HepG2 (cell line): ENCODE measurements at regions of chr6 and their contacts with region 1.

Region 1: DNA sequence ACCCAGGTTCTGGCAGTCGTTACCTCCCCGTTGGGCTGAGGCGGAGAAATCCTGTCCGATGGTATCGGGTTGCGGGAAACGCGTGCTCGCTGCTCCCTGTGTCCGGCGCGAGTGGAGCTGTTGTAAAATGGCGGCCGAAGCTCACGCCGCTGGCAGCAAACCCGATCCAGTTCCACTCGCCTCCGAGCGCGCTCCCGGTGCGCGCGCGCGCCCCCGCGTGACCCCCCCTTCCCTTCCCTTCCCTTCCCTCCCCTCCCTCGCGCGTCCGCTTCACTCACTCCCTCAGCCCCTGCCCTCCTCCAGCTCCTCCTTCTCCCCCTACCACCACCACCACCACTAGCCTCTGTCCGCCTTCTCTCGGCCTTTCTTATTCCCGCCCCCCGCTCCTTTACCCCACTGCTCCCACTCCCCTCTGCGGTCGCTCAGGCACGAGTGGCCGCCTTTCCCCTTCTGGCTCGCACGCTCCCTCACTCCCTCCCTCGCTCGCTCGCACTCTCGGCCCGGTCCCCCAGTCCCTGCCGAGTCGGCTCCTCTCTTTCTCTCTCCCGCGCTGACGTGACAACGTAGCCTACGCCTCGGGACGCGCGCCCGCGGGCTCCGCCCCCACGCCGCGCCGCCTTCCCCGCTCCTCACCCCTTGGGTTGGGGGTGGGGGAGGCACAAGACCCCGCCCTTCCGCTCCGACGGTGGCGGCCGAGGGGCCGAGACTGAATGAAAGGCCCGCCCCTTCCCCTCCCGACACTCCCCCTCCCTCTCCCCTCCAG is at the start of gene SYNCRIP:
- DNase-seq: peak; percentile 95
- ATAC-seq: peak; percentile 83
- H3K4me3 ChIP-seq: peak within 1 kb of the TSS; percentile 78 to 96 (median 96)
- H3K27ac ChIP-seq: peak within 1 kb of the TSS; percentile 99
- H3K4me1 ChIP-seq: peaks cover 38% of the 10 kb centered on the region
- H3K27me3 ChIP-seq: no peaks in the 10 kb centered on the region; a peak in 1 of 5 replicates
- CTCF ChIP-seq: peak; percentile 17; the same call in 1 of the 2 replicates
- EP300 ChIP-seq: peak in 1 of 2 experiments; percentile 30; a peak in 1 of 4 replicates
- POLR2A ChIP-seq: peak; percentile 79 to 97
- RAD21 ChIP-seq: no peak
- total RNA-seq, gene SYNCRIP: 112 and 183 TPM in 2 replicates

Region 2: GRCh38 chr6:85612690-85613474 is 30.1 kb before region 1 on chr6:
- CTCF ChIA-PET with region 1: no interaction called
- POLR2A ChIA-PET with region 1: no interaction called
- in situ Hi-C with region 1: no loop called
- intact Hi-C with region 1: no loop called
- DNase-seq: no peak
- ATAC-seq: no peak
- H3K4me3 ChIP-seq: no peak overlapping the region
- H3K27ac ChIP-seq: no peak overlapping the region
- H3K4me1 ChIP-seq: no peaks in the 10 kb centered on the region
- H3K27me3 ChIP-seq: no peaks in the 10 kb centered on the region
- CTCF ChIP-seq: no peak
- EP300 ChIP-seq: no peak
- POLR2A ChIP-seq: no peak
- RAD21 ChIP-seq: no peak

Region 3: GRCh38 chr6:85632164-85632942 is 10.6 kb before region 1 on chr6:
- CTCF ChIA-PET with region 1: no interaction called
- POLR2A ChIA-PET with region 1: interaction called, 14 read pairs
- in situ Hi-C with region 1: no loop called
- intact Hi-C with region 1: no loop called
- DNase-seq: no peak
- ATAC-seq: no peak; the same call in 2 of the 3 replicates
- H3K4me3 ChIP-seq: no peak overlapping the region
- H3K27ac ChIP-seq: no peak overlapping the region
- H3K4me1 ChIP-seq: peaks cover 27% of the 10 kb centered on the region
- H3K27me3 ChIP-seq: no peaks in the 10 kb centered on the region
- CTCF ChIP-seq: no peak
- EP300 ChIP-seq: no peak
- POLR2A ChIP-seq: no peak
- RAD21 ChIP-seq: no peak

Region 4: GRCh38 chr6:85660181-85660611 is 17.2 kb after region 1 on chr6:
- CTCF ChIA-PET with region 1: no interaction called
- POLR2A ChIA-PET with region 1: interaction called, 13 read pairs
- in situ Hi-C with region 1: no loop called
- intact Hi-C with region 1: no loop called
- DNase-seq: peak; percentile 59
- ATAC-seq: peak; percentile 99
- H3K4me3 ChIP-seq: peak overlapping the region; percentile 11 to 60 (median 35); a peak in 5 of 6 replicates
- H3K27ac ChIP-seq: no peak overlapping the region
- H3K4me1 ChIP-seq: peaks cover 4% of the 10 kb centered on the region; the same call in 1 of the 2 replicates
- H3K27me3 ChIP-seq: no peaks in the 10 kb centered on the region
- CTCF ChIP-seq: peak; percentile 77
- EP300 ChIP-seq: no peak
- POLR2A ChIP-seq: no peak
- RAD21 ChIP-seq: no peak

Region 5: GRCh38 chr6:85669735-85670194 is 26.8 kb after region 1 on chr6:
- CTCF ChIA-PET with region 1: no interaction called
- POLR2A ChIA-PET with region 1: interaction called, 245 read pairs
- in situ Hi-C with region 1: no loop called
- intact Hi-C with region 1: no loop called
- DNase-seq: no peak
- ATAC-seq: peak; percentile 29
- H3K4me3 ChIP-seq: no peak overlapping the region
- H3K27ac ChIP-seq: no peak overlapping the region
- H3K4me1 ChIP-seq: peaks cover 14% of the 10 kb centered on the region
- H3K27me3 ChIP-seq: no peaks in the 10 kb centered on the region
- CTCF ChIP-seq: no peak
- EP300 ChIP-seq: no peak
- POLR2A ChIP-seq: no peak
- RAD21 ChIP-seq: no peak